Gastrocnemius medialis (tissue), 4 donors: ENCODE measurements at regions of chr10 and their contacts with region 1.

Region 1: GRCh38 chr10:119680050-119680449 is 28.9 kb downstream of the BAG3 start:
- DNase-seq: peak in 1 of 2 donors; percentile 56
- ATAC-seq: peak; percentile 4 to 5
- H3K4me3 ChIP-seq: no peak overlapping the region
- H3K27ac ChIP-seq: peak overlapping the region; percentile 87 to 99 (median 97)
- H3K4me1 ChIP-seq: peaks cover 68 to 74% of the 10 kb centered on the region in 2 donors
- H3K27me3 ChIP-seq: no peaks in the 10 kb centered on the region
- CTCF ChIP-seq: no peak
- POLR2A ChIP-seq: no peak

Region 2: DNA sequence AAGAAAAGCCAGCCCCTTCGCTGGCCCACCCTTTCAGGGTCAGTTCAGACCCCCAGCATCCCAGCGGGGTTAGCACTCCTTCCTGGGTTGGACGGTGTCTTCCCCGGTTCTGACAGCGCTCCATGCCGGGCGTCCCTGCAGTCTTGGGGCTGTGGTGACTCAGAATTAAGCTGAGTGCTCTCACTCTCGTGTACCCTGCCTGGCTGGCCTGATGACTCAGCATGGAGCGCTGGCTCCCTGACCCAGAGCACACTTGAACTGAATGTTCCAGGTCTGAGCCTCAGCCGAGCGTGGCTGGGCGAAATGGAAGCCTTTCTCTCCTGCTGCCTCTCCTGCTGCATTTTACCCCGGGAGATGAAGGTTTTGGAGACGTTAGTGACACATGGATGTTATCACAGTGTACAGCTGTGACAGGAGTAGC is 21.8 kb before region 1 on chr10:
- in situ Hi-C with region 1: no loop called
- intact Hi-C with region 1: loop called (anchors 1 kb)
- DNase-seq: peak; percentile 91 to 94
- ATAC-seq: peak; percentile 69 to 73
- H3K4me3 ChIP-seq: peak overlapping the region; percentile 37 to 85 (median 80)
- H3K27ac ChIP-seq: peak overlapping the region; percentile 91 to 99 (median 97)
- H3K4me1 ChIP-seq: peaks cover 91 to 95% of the 10 kb centered on the region in 2 donors
- H3K27me3 ChIP-seq: no peaks in the 10 kb centered on the region
- CTCF ChIP-seq: no peak
- POLR2A ChIP-seq: peak; percentile 71 to 89

Region 3: GRCh38 chr10:119667562-119668328 is 12.3 kb before region 1 on chr10:
- in situ Hi-C with region 1: no loop called
- intact Hi-C with region 1: loop called (anchors 1 kb)
- DNase-seq: peak; percentile 95 to 99
- ATAC-seq: peak; percentile 74 to 80
- H3K4me3 ChIP-seq: peak overlapping the region; percentile 18 to 42 (median 26)
- H3K27ac ChIP-seq: peak overlapping the region; percentile 91 to 99 (median 97)
- H3K4me1 ChIP-seq: peaks cover 90 to 95% of the 10 kb centered on the region in 2 donors
- H3K27me3 ChIP-seq: no peaks in the 10 kb centered on the region
- CTCF ChIP-seq: no peak
- POLR2A ChIP-seq: peak; percentile 66 to 80

Region 4: DNA sequence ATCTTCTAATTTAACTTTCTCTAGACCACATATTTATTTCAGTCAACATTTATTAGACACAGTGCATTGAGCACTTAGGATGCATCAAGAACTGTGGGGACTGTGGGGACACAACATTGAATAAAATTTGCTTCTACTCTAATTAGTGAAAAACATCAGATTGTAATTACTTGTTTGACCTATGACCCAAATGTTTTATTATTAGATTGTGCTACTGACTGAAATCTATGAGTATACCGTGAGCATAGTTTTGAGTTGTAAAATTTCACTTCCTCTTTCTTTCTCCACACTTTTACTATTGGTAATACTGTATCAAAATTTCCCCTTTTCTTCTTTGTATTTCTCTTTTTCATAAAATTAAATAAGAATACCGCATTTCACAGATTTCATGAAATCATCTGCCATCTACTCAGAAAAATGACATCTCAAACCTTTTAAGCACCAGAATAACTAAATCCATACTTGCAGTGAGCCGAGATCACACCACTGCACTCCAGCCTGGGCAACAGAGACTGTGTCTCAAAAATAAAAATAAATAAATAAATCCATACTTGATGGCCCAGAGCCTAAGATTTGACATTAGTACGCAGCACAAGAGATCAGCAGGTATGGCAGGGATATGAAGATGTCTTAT is 20.4 kb after region 1 on chr10:
- in situ Hi-C with region 1: no loop called
- intact Hi-C with region 1: no loop called
- DNase-seq: no peak
- ATAC-seq: no peak
- H3K4me3 ChIP-seq: no peak overlapping the region
- H3K27ac ChIP-seq: no peak overlapping the region
- H3K4me1 ChIP-seq: no peaks in the 10 kb centered on the region
- H3K27me3 ChIP-seq: no peaks in the 10 kb centered on the region
- CTCF ChIP-seq: no peak
- POLR2A ChIP-seq: no peak

Region 5: GRCh38 chr10:119903946-119904666 is 224.1 kb after region 1 on chr10:
- in situ Hi-C with region 1: no loop called
- intact Hi-C with region 1: no loop called
- DNase-seq: no peak
- ATAC-seq: no peak
- H3K4me3 ChIP-seq: no peak overlapping the region
- H3K27ac ChIP-seq: no peak overlapping the region
- H3K4me1 ChIP-seq: no peaks in the 10 kb centered on the region
- H3K27me3 ChIP-seq: no peaks in the 10 kb centered on the region
- CTCF ChIP-seq: no peak
- POLR2A ChIP-seq: no peak